ENCODE measurements at regions of chr2 and their contacts with region 1.

Region 1: DNA sequence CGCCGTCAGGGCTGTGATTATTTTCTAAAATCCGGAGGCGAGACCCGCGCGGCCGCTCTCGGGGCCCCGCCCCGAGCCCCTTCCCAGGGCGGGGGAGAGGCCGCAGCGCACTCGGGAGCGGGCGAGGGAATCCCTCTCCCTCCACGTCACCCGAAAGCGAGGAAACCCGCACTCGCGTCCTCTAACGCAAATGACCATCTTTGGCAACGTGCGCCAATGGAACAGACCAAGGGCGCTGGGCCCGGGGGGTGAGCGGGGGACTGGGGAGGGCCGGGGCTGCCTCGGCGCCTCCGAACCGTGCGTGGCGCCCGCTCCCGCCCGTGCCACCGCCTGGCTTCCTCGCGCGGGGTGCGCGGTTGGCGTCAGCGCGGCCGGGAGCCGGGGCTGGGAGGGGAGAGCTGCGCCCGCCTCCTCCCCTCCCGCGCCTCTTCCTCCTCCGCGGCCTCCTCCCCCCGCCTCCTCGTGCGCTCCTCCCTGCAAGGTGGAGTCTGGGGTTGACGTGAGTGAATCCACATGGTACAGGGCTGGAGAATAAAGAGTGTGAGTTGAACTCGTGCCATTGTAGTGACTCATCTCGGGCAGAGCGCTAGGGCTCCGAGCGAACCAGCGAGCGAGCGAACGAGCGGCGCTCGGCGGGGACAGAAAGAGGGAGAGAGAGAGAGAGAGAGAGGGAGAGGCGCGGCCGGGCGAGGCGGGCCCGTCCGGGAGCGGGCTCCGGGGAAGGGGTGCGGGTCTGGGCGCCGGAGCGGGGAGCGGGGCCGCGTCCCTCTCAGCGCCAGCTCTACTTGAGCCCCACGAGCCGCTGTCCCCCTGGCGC is at the start of gene FOSL2:
- DNase-seq: peak; percentile 94 to 99
- H3K4me3 ChIP-seq: peak within 1 kb of the TSS; percentile 81 to 96
- H3K27ac ChIP-seq: peak within 1 kb of the TSS; percentile 99 to 100
- H3K4me1 ChIP-seq: peaks cover 0 to 12% of the 10 kb centered on the region in 2 donors
- H3K27me3 ChIP-seq: no peaks in the 10 kb centered on the region
- CTCF ChIP-seq: no peak
- total RNA-seq, gene FOSL2: 185 TPM

Region 2: DNA sequence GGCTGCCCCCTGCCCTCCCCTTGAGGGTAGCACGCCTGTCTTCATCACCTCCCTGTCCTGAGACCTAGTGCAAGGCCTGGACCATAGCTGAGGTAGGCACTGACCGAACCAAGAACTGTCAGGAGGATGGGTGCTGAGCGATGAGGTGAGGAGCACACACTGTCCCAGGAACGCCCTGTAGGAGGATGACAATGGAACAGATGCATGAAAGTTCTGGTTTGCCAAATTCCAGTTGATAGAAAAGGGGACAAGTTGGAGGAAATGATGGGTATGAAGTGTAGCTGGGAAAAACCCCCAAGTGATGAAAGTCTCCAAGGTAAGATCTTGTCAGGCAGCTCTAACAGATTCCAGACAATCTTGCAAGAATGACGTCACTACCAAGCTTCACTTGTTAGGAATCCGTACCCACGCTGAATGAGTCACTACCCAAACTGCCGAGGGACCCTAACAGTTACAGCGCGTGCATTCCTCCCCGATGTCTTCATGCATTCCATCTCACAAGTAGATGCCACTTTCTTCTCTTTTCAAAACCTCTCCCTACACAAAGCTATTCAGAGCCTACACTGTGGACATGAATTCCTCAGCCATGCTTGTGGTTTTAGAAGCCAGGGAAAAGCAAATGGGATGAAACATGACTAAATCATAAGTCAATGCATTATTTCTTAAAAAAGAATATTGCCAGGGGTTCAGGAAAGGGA is 593.4 kb before region 1 on chr2:
- intact Hi-C with region 1: loop called (anchors 1 kb)
- DNase-seq: peak; percentile 58 to 95
- H3K4me3 ChIP-seq: no peak overlapping the region
- H3K27ac ChIP-seq: peak overlapping the region; percentile 96 to 98
- H3K4me1 ChIP-seq: peaks cover 30 to 57% of the 10 kb centered on the region in 2 donors
- H3K27me3 ChIP-seq: no peaks in the 10 kb centered on the region
- CTCF ChIP-seq: no peak

Region 3: DNA sequence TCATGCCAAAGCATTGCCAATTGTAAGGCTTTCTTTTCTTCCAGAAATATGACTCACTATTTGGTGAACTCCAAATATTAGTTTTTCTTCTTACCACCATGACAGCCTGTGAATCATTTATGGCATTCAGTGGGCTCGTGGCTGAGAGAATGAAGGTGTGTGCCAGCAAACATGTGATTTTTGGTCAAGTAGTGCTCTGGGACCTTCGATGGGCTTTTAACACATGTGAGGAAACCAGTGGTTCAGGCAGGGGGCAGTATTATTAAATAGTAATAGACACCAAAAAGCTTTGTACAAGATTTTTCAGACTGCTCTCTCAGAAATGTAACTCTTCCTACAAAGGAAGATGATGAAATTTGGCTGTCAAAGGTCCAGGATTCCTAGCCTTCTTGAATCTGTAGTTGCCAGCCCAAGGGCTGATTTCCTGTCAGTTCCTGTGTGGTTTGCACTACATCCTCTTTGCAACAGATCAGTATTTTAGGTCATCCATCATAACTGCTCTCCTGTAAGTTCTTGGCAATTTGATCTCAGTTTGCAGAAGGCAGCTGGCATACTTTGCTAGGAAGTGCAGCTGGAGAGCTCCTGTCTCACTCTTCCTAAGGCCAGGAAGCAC is 437.6 kb before region 1 on chr2:
- intact Hi-C with region 1: loop called (anchors 1 kb)
- DNase-seq: peak; percentile 51 to 89
- H3K4me3 ChIP-seq: no peak overlapping the region
- H3K27ac ChIP-seq: peak overlapping the region; percentile 71 to 77
- H3K4me1 ChIP-seq: peaks cover 19 to 34% of the 10 kb centered on the region in 2 donors
- H3K27me3 ChIP-seq: no peaks in the 10 kb centered on the region
- CTCF ChIP-seq: peak in 2 of 3 experiments; percentile 16 to 46

Region 4: DNA sequence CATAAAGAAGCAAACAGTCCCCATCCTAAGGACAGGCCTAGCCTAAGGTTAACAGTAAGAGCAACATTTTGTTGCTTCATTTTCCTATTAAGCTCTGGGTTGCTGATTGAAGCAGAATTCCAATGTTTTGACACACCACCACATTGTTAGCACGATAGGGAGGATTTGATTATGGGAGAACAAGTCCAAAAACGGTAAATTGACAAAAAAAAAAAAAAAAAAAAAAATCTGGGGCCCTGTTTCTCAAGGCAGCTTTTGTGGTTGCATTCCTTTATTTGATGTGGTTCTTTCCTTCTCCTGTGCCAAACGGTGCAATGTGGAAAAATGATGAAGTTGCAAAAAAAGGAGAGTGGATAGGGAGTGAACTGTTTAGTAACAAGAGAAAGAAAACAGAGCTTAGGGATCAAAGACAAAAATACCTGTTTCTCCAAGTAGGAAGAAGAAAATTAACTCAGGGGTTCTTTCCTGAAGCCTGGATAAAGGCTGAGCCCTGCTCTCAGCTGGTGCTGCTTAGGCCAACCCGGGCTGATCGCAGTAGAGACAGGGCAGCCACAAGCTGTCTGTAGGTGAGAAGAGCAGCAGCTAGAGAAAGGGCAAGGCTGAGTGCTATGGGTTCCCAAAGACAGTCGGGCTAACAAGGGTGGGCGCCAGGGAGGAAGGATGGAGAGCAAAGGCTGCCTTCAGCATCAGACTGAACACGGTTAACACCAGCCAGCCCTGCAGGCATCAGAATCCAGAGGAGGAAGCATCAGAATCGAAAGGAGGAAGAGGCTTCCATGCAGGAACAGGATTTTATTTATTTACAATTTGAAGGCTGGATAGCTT is 167.6 kb before region 1 on chr2:
- intact Hi-C with region 1: loop called (anchors 5 kb)
- DNase-seq: no peak
- H3K4me3 ChIP-seq: peak overlapping the region in 1 of 2 donors; percentile 31
- H3K27ac ChIP-seq: peak overlapping the region; percentile 55 to 67
- H3K4me1 ChIP-seq: peaks cover 0 to 15% of the 10 kb centered on the region in 2 donors
- H3K27me3 ChIP-seq: no peaks in the 10 kb centered on the region
- CTCF ChIP-seq: no peak

Region 5: DNA sequence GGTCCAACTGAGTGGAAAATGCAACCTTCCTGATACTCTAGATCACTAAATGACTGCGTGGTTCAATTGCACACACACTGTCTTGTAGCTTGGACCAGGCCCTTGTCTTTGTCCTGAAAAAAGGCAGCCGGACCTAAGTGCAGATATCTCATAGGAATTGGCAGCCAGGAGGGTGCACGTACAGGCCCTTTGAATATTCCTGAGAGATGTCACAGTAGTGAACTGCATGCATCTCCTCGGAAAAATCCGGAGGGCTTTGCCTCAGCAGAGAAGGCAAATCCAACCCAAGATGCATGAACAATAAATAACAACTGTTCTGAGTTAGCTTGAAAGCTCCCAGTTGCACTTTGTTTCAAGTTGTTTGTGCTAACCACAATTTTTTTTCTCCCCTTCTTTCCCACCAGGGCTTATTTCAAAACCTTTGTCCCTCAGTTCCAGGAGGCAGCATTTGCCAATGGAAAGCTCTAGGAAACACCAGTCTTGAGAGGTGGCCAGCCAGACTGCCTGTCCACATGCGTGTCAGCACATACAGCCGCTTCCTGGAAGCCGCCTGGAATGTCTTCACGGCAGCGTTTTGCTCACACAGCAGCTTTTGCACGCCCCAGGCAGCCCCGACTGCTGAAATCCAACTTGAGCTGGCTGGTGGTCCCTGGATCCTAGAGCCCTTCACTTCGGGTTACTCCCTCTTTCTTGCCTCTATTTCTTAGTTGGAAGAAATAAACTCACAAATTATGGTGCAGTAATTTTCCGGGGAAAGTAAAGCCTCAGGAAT is 54.3 kb before region 1 on chr2:
- intact Hi-C with region 1: loop called (anchors 1 kb)
- DNase-seq: peak in 1 of 2 donors; percentile 92
- H3K4me3 ChIP-seq: no peak overlapping the region
- H3K27ac ChIP-seq: peak overlapping the region; percentile 45 to 57
- H3K4me1 ChIP-seq: peaks cover 10 to 62% of the 10 kb centered on the region in 2 donors
- H3K27me3 ChIP-seq: no peaks in the 10 kb centered on the region
- CTCF ChIP-seq: no peak

Region 6: DNA sequence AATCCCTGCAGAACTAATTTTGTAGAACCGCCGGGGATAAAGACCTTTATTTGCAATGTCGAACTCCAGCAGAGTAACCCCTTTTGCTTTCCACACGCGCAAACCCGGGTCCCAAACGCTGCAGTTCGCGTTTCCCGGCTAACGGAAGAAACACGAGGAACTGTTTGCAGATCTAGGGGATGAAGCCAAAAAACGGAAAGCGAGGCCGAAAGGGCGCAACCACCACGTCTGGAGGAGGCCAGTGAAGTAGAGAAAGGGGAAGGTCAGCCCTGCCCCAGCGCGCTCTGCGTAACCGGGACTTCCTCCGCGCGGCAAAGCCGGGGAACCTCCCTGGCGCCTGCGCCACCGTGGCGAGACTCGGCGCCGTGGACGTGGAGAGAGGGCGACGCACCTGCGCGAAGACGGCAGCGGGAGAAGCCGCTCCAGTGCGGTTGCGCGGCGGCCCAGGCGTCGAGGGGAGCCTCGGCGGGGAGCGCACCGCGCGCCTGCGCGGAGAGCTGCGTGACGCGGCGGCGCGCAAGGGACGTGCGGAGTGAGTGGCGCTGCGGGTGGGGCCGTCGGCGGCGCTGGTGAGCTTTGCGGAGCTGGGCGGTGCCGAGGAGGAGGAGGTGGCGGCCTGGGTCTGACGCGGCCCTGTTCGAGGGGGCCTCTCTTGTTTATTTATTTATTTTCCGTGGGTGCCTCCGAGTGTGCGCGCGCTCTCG is 358.9 kb after region 1 on chr2 and contains the start of gene PPP1CB:
- intact Hi-C with region 1: loop called (anchors 10 kb)
- DNase-seq: peak; percentile 88 to 97
- H3K4me3 ChIP-seq: peak within 1 kb of the TSS; percentile 75 to 89
- H3K27ac ChIP-seq: peak within 1 kb of the TSS; percentile 100
- H3K4me1 ChIP-seq: peaks cover 15 to 40% of the 10 kb centered on the region in 2 donors
- H3K27me3 ChIP-seq: no peaks in the 10 kb centered on the region
- CTCF ChIP-seq: peak; percentile 9 to 34 (median 26)
- total RNA-seq, gene PPP1CB: 196 TPM